ENCODE measurements at regions of chr11 and their contacts with region 1.

Region 1: GRCh38 chr11:46916286-46917108 is 1.9 kb downstream of the LRP4 start:
- DNase-seq: no peak
- ATAC-seq: peak; percentile 11
- H3K4me3 Mint-ChIP-seq: peak overlapping the region; percentile 44
- H3K27ac Mint-ChIP-seq: no peak overlapping the region
- H3K4me1 Mint-ChIP-seq: peaks cover 26% of the 10 kb centered on the region
- H3K27me3 Mint-ChIP-seq: peaks cover 72% of the 10 kb centered on the region

Region 2: GRCh38 chr11:46936138-46937110 is 19.9 kb after region 1 on chr11 and contains the start of gene CSTPP1:
- CTCF ChIA-PET with region 1: interaction called, 12 read pairs
- DNase-seq: peak; percentile 97
- ATAC-seq: peak; percentile 97
- H3K4me3 Mint-ChIP-seq: peak within 1 kb of the TSS; percentile 83
- H3K27ac Mint-ChIP-seq: peak within 1 kb of the TSS; percentile 84
- H3K4me1 Mint-ChIP-seq: peaks cover 18% of the 10 kb centered on the region
- H3K27me3 Mint-ChIP-seq: peaks cover 7% of the 10 kb centered on the region
- total RNA-seq, gene CSTPP1: 14.5 to 18.2 TPM

Region 3: GRCh38 chr11:46972343-46972742 is 55.8 kb after region 1 on chr11:
- CTCF ChIA-PET with region 1: no interaction called
- DNase-seq: no peak
- ATAC-seq: no peak
- H3K4me3 Mint-ChIP-seq: no peak overlapping the region
- H3K27ac Mint-ChIP-seq: no peak overlapping the region
- H3K4me1 Mint-ChIP-seq: peaks cover 6% of the 10 kb centered on the region
- H3K27me3 Mint-ChIP-seq: no peaks in the 10 kb centered on the region

Measured in activated CD8-positive, alpha-beta memory T cell treated with anti-CD3 and anti-CD28 coated beads, Interleukin-2, amount 10 ng/mL, durations not matched to agents 7 days and 5 days (primary cell).